CD8-positive, alpha-beta T cell (primary cell): ENCODE measurements at regions of chr19 and their contacts with region 1.

Region 1: DNA sequence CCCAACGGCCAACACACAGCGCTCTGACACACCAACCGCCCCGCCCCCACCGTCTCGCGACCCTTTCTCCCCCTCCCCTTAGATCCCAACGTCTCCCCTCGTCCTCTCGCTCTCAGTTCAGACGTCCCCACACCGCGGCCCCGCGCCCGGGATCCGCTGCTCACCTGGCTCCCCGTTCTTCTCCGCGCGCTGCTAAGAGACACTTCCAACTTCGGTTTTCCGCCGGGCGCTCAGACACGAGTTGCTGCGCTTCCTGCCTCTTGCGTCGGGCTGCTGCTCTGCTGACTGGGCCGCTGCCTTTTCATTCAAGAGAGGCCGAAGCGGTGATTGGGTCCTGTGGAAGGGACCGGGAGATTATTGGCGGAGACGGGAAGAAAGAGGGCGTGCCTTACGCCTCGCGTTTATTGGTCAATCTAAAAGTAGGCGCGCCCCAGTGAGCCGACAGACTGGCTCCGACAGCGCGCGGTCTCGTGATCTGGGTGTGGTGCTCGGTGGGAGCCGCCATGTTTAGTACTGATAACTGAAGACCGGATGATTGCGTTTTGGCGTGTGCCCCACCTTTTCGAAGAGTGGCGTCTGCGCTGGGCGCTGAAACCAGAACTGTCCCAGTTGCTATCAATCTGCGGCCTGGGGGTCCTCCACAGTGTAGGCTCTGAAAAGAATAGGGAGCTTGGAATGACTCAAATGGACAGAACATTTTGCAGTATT is at the start of gene DDX39A:
- DNase-seq: peak; percentile 92 to 99 (median 96)
- ATAC-seq: peak; percentile 86
- H3K4me3 ChIP-seq: peak within 1 kb of the TSS; percentile 63 to 96
- H3K4me3 Mint-ChIP-seq: peak within 1 kb of the TSS; percentile 92
- H3K27ac ChIP-seq: peak within 1 kb of the TSS; percentile 61 to 94
- H3K27ac Mint-ChIP-seq: peak within 1 kb of the TSS; percentile 95
- H3K4me1 ChIP-seq: peaks cover 42% of the 10 kb centered on the region
- H3K4me1 Mint-ChIP-seq: peaks cover 42% of the 10 kb centered on the region
- H3K27me3 ChIP-seq: no peaks in the 10 kb centered on the region
- H3K27me3 Mint-ChIP-seq: no peaks in the 10 kb centered on the region
- CTCF ChIP-seq: no peak
- total RNA-seq, gene DDX39A: 342 to 372 TPM

Region 2: GRCh38 chr19:14091081-14091812 is 328.0 kb before region 1 on chr19:
- CTCF ChIA-PET with region 1: no interaction called
- POLR2A ChIA-PET with region 1: no interaction called
- intact Hi-C with region 1: loop called in 1 of 2 experiments (anchors 2 kb)
- DNase-seq: peak in 8 of 9 experiments; percentile 37 to 84 (median 69)
- ATAC-seq: peak; percentile 42
- H3K4me3 ChIP-seq: peak overlapping the region; percentile 82 to 87
- H3K4me3 Mint-ChIP-seq: peak overlapping the region; percentile 99
- H3K27ac ChIP-seq: peak overlapping the region; percentile 51 to 66
- H3K27ac Mint-ChIP-seq: peak overlapping the region; percentile 98
- H3K4me1 ChIP-seq: peaks cover 13% of the 10 kb centered on the region
- H3K4me1 Mint-ChIP-seq: peaks cover 22% of the 10 kb centered on the region
- H3K27me3 ChIP-seq: no peaks in the 10 kb centered on the region
- H3K27me3 Mint-ChIP-seq: no peaks in the 10 kb centered on the region
- CTCF ChIP-seq: peak; percentile 40

Region 3: GRCh38 chr19:14432791-14433553 is 13.7 kb after region 1 on chr19 and contains the start of gene PKN1:
- CTCF ChIA-PET with region 1: interaction called, 19 read pairs
- POLR2A ChIA-PET with region 1: interaction called, 6 read pairs
- intact Hi-C with region 1: loop called (anchors 1 kb)
- DNase-seq: peak in 7 of 9 experiments; percentile 39 to 72 (median 52)
- ATAC-seq: peak; percentile 18
- H3K4me3 ChIP-seq: peak within 1 kb of the TSS; percentile 83 to 85
- H3K4me3 Mint-ChIP-seq: peak within 1 kb of the TSS; percentile 89
- H3K27ac ChIP-seq: peak within 1 kb of the TSS; percentile 68 to 85
- H3K27ac Mint-ChIP-seq: peak within 1 kb of the TSS; percentile 90
- H3K4me1 ChIP-seq: peaks cover 43% of the 10 kb centered on the region
- H3K4me1 Mint-ChIP-seq: peaks cover 39% of the 10 kb centered on the region
- H3K27me3 ChIP-seq: no peaks in the 10 kb centered on the region
- H3K27me3 Mint-ChIP-seq: no peaks in the 10 kb centered on the region
- CTCF ChIP-seq: no peak
- total RNA-seq, gene PKN1: 152 to 158 TPM

Region 4: GRCh38 chr19:14440049-14440448 is 20.8 kb after region 1 on chr19:
- CTCF ChIA-PET with region 1: interaction called, 3 read pairs
- POLR2A ChIA-PET with region 1: no interaction called
- intact Hi-C with region 1: loop called in 1 of 2 experiments (anchors 2 kb)
- DNase-seq: peak; percentile 55 to 90 (median 79)
- ATAC-seq: peak; percentile 99
- H3K4me3 ChIP-seq: peak overlapping the region; percentile 73 to 84
- H3K4me3 Mint-ChIP-seq: peak overlapping the region; percentile 93
- H3K27ac ChIP-seq: peak overlapping the region; percentile 80 to 84
- H3K27ac Mint-ChIP-seq: peak overlapping the region; percentile 93
- H3K4me1 ChIP-seq: peaks cover 55% of the 10 kb centered on the region
- H3K4me1 Mint-ChIP-seq: peaks cover 55% of the 10 kb centered on the region
- H3K27me3 ChIP-seq: no peaks in the 10 kb centered on the region
- H3K27me3 Mint-ChIP-seq: no peaks in the 10 kb centered on the region
- CTCF ChIP-seq: no peak